Breast epithelium (tissue), 4 donors: ENCODE measurements at regions of chr9 and their contacts with region 1.

Region 1: DNA sequence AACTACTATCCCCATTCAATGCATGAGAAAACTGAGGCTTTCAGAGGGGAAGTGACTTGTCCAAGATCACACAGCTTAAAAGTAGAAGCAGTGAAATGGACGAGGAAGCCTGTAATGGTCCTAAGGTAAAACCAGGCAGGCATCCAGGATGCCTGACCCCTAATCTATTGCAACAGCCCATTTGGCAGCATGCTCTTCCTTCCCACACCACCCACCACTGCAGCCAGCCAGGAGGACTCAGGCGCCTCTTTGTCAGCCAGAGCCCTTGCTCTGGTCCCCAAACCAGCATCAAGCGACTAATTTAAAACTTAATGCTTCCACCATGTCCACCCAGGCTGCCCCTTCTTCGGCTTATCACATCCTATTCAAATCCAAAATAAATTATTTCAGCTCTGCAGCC is 541.6 kb downstream of the CDK5RAP2 start:
- DNase-seq: no peak
- H3K4me3 ChIP-seq: no peak overlapping the region
- H3K27ac ChIP-seq: no peak overlapping the region
- H3K4me1 ChIP-seq: no peaks in the 10 kb centered on the region
- H3K27me3 ChIP-seq: no peaks in the 10 kb centered on the region
- CTCF ChIP-seq: no peak
- POLR2A ChIP-seq: no peak

Region 2: DNA sequence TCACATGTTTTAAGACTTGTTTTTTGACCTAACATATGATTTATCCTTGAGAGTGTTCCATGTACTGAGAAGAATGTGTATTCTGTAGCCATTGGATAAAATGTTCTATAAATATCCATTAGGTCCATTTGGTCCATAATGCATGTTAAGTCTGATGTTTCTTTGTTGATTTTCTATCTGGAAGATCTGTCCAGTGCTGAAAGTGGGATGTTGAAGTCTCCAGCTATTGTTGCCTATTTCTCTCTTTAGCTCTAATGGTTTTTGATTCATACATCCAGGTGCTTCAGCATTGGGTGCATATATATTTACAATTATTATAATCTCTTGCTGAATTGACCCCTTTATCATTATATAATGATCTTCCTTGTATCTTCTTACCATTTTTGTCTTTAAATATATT is 1120.2 kb before region 1 on chr9:
- intact Hi-C with region 1: no loop called
- DNase-seq: no peak
- H3K4me3 ChIP-seq: no peak overlapping the region
- H3K27ac ChIP-seq: no peak overlapping the region
- H3K4me1 ChIP-seq: no peaks in the 10 kb centered on the region
- H3K27me3 ChIP-seq: no peaks in the 10 kb centered on the region
- CTCF ChIP-seq: no peak
- POLR2A ChIP-seq: no peak

Region 3: DNA sequence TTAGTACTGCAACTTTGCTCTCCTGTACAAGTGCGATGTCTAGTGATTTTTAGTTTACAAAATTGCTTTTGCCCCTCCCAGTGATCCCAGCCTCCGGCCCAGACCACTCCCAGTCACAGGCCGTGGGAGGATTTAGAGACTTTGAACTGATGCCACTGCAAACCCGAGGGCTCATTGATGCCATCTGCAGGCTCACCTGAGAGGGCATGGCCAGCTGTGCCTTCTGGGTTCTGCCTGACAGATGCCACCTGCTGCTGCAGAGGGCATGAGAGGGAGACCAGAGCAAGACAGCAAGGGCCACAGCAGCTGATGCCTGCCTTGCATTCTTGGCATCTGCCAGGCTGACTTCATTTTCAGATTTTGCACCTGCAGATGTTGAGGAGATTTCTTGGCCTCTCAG is 52.1 kb before region 1 on chr9:
- intact Hi-C with region 1: no loop called
- DNase-seq: no peak
- H3K4me3 ChIP-seq: no peak overlapping the region
- H3K27ac ChIP-seq: no peak overlapping the region
- H3K4me1 ChIP-seq: no peaks in the 10 kb centered on the region
- H3K27me3 ChIP-seq: no peaks in the 10 kb centered on the region
- CTCF ChIP-seq: no peak
- POLR2A ChIP-seq: no peak

Region 4: DNA sequence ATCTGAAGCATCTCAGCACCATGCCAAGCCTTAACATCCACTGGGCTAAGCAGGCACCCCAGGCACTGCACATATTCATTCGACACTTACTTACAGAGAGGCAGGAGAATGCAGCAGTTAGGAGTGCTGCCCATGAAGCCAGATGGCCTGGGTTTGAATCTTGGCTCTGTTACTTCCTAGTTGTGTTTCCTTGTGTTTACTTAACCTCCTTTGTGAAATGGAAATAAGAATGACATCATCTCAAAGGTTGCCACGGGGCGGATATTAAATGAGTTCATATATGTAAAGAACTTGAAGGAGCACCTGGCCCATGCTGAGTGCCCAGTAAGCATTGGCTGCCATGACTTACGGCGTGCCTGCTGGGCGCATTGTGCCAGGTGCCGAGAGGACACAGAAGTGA is 23.5 kb before region 1 on chr9:
- intact Hi-C with region 1: no loop called
- DNase-seq: no peak
- H3K4me3 ChIP-seq: no peak overlapping the region
- H3K27ac ChIP-seq: no peak overlapping the region
- H3K4me1 ChIP-seq: no peaks in the 10 kb centered on the region
- H3K27me3 ChIP-seq: no peaks in the 10 kb centered on the region
- CTCF ChIP-seq: no peak
- POLR2A ChIP-seq: no peak

Region 5: DNA sequence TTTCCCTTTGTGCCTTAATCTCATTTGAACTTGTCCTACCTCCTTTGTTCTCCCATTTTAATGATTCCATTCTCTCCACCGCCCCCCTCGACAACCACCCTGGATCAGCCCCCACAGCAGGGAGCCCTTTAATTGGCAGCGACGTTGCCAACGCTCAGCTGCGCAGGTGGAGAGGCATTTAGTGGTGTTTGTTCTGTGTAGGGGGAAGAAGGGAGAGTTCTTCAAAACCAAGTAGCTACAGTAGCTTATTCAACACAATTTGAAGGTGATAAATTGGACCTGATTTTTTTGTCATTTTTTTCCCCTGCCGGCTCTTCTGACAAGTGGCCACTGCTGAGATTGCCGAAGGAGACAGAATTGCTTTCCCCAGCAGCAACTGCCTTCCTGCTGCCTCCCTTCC is 42.5 kb after region 1 on chr9:
- intact Hi-C with region 1: loop called (anchors 2 kb)
- DNase-seq: no peak
- H3K4me3 ChIP-seq: no peak overlapping the region
- H3K27ac ChIP-seq: no peak overlapping the region
- H3K4me1 ChIP-seq: no peaks in the 10 kb centered on the region
- H3K27me3 ChIP-seq: peaks cover 0 to 3% of the 10 kb centered on the region in 2 donors
- CTCF ChIP-seq: no peak
- POLR2A ChIP-seq: no peak

Region 6: DNA sequence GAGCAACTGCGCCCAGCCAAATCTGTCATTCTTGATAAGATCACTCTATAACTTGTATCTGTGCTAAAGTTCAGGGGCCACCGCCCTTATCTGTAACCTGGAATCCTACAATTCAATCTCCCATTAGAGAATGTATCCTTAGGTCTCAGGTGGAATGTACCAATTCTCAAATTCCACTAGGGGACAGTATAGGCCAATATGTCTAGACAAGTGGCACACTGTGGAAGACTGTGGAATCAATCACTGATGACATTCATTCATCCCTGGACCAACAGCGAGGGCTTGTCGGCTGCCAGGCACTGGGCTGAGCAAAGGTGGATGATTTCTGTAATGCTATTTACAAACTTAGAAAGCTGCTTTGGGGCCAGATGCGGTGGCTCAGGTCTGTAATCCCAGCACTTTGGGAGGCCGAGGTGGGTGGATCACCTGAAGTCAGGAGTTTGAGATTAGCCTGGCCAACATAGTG is 704.6 kb after region 1 on chr9:
- intact Hi-C with region 1: no loop called
- DNase-seq: no peak
- H3K4me3 ChIP-seq: no peak overlapping the region
- H3K27ac ChIP-seq: no peak overlapping the region
- H3K4me1 ChIP-seq: no peaks in the 10 kb centered on the region
- H3K27me3 ChIP-seq: no peaks in the 10 kb centered on the region
- CTCF ChIP-seq: peak; percentile 36 to 53 (median 41)
- POLR2A ChIP-seq: no peak